ENCODE measurements at regions of chr17 and their contacts with region 1.

Region 1: DNA sequence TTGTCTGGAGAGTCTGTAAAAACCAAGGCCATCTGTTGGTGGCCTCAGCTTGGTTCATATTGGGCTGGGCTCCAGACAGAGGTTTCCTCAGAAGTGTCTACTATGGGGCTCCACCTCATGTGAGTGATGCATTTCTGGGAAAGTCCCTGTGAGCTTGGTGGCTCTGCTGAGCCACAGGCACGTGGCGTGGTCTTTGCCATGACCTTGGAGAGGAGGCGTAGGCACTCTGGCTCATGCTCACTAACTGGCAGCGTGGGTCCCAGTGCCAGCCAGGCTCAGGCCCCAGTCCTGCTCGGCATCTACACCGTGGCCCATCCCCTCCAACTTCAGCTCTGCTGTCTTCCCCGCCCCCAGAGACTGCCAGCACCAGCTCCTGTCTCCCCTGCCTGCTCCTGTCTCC is 10.7 kb upstream of the SMTNL2 start:
- DNase-seq: peak; percentile 88

Region 2: DNA sequence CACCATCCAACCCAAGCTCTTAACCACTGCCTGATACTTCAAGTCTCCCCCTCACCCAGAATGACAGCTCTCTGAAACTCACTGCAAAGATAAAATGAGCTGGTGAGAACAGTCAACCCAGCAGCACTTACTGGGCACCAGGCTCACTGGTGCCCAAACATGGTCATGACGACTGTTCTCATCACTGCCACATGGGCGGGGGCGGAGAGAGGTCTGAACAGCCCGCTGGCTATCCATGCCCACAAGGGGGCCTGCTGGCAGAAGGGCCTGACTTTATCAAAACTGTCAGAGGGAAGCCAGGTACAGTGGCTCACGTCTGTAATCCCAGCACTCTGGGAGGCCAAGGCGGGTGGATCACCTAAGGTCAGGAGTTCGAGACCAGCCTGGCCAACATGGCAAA is 22.5 kb before region 1 on chr17:
- intact Hi-C with region 1: no loop called
- DNase-seq: no peak

Region 3: GRCh38 chr17:4599505-4600306 is 26.0 kb after region 1 on chr17:
- intact Hi-C with region 1: loop called (anchors 2 kb)
- DNase-seq: no peak